ENCODE measurements at regions of chr18 and their contacts with region 1.

Region 1: DNA sequence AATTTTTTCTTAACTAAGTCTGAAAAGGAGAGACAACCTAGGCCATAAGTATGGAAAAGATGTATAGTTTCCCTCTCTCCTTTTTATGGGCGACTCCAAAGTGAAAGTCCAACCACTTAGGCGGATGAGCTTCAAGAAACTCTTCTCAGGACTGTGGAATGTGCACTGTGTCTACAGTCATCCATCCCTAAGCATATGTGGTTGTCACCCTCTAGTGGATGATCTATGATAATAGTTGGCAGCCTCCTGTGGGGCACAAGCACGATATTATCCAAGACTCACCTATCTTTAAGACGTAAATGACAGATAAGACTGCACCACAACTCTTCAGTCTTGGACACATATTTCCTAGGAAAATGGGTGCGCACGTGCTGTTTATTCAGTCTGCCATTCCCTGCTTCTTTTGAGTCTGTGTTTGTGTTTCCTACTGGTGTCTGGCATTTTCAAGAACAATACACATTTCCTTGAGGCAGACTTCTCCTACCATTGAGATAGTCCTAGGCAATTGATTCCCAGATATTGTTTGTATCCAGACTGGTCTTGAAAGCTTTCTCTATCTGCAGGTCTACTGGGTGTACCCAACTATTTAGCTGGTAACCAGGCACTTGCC is 145.5 kb upstream of the CTAGE1 start:
- DNase-seq: peak in 4 of 5 donors; percentile 53 to 91 (median 71)
- H3K4me3 ChIP-seq: peak overlapping the region in 1 of 3 donors; percentile 5
- H3K27ac ChIP-seq: no peak overlapping the region
- H3K4me1 ChIP-seq: no peaks in the 10 kb centered on the region
- H3K27me3 ChIP-seq: peaks cover 16% of the 10 kb centered on the region
- CTCF ChIP-seq: peak; percentile 69

Region 2: GRCh38 chr18:22169007-22169864 is 394.0 kb before region 1 on chr18 and contains the start of gene GATA6:
- intact Hi-C with region 1: loop called (anchors 10 kb)
- DNase-seq: peak; percentile 87 to 96 (median 90)
- H3K4me3 ChIP-seq: peak within 1 kb of the TSS; percentile 70 to 84 (median 77)
- H3K27ac ChIP-seq: peak within 1 kb of the TSS; percentile 86 to 91
- H3K4me1 ChIP-seq: peaks cover 0 to 7% (median 0%) of the 10 kb centered on the region in 3 donors
- H3K27me3 ChIP-seq: peaks cover 51% of the 10 kb centered on the region
- CTCF ChIP-seq: peak; percentile 50
- total RNA-seq, gene GATA6: 10.9 TPM

Region 3: DNA sequence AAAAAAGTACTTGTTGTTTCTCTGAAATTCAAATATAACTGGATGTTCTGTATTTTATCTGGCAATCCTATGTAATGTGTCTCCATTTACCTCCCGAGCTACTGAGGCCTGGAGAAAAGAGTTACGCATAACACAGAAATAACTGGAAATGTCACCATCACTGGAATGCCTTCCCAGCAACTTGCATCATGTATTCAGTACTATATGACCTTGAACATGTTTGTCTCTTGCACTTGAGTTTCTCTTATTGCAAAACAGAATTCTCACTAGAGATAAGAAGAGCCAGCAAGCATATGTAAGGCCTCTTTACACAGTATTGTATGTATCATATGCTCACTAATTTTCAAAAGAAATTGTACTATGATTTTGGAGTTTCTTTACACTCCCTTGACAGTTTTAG is 45.8 kb before region 1 on chr18:
- intact Hi-C with region 1: no loop called
- DNase-seq: no peak
- H3K4me3 ChIP-seq: no peak overlapping the region
- H3K27ac ChIP-seq: no peak overlapping the region
- H3K4me1 ChIP-seq: no peaks in the 10 kb centered on the region
- H3K27me3 ChIP-seq: no peaks in the 10 kb centered on the region
- CTCF ChIP-seq: no peak

Measured in kidney (tissue), 22 donors.